Activated CD4-positive, alpha-beta memory T cell treated with anti-CD3 and anti-CD28 coated beads, Interleukin-2, amount 10 ng/mL, durations not matched to agents 7 days and 5 days (primary cell): ENCODE measurements at regions of chr20 and their contacts with region 1.

Region 1: GRCh38 chr20:44885392-44886265 is at the start of gene YWHAB:
- DNase-seq: peak; percentile 99
- H3K4me3 Mint-ChIP-seq: peak within 1 kb of the TSS; percentile 89
- H3K27ac Mint-ChIP-seq: peak within 1 kb of the TSS; percentile 90
- H3K4me1 Mint-ChIP-seq: peaks cover 48% of the 10 kb centered on the region
- H3K27me3 Mint-ChIP-seq: no peaks in the 10 kb centered on the region
- total RNA-seq, gene YWHAB: 277 to 279 TPM

Region 2: GRCh38 chr20:44770484-44771170 is 115.0 kb before region 1 on chr20:
- CTCF ChIA-PET with region 1: no interaction called
- POLR2A ChIA-PET with region 1: no interaction called
- DNase-seq: no peak
- H3K4me3 Mint-ChIP-seq: no peak overlapping the region
- H3K27ac Mint-ChIP-seq: no peak overlapping the region
- H3K4me1 Mint-ChIP-seq: no peaks in the 10 kb centered on the region
- H3K27me3 Mint-ChIP-seq: peaks cover 19% of the 10 kb centered on the region

Region 3: DNA sequence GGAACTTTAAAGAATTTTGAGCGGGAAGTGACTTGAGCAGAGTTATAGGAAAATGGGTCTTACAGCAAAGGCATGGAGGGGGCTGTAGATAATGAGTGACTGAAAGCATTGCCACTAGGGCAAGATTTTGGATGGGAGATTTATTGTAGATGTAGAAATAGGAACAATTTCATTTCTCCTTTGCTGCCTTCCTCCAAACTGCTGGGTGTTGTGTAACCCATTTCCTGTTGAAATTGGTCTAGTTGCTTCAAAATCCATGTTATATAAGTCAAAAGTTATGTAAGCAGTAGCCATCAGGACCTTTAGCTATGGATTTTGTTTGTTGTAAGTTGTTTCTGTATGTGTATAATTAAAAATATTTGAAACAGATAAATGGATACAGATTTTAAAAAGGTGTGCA is 11.0 kb after region 1 on chr20:
- CTCF ChIA-PET with region 1: interaction called, 9 read pairs
- POLR2A ChIA-PET with region 1: interaction called, 19 read pairs
- DNase-seq: no peak
- H3K4me3 Mint-ChIP-seq: no peak overlapping the region
- H3K27ac Mint-ChIP-seq: peak overlapping the region; percentile 30
- H3K4me1 Mint-ChIP-seq: peaks cover 83% of the 10 kb centered on the region
- H3K27me3 Mint-ChIP-seq: no peaks in the 10 kb centered on the region

Region 4: DNA sequence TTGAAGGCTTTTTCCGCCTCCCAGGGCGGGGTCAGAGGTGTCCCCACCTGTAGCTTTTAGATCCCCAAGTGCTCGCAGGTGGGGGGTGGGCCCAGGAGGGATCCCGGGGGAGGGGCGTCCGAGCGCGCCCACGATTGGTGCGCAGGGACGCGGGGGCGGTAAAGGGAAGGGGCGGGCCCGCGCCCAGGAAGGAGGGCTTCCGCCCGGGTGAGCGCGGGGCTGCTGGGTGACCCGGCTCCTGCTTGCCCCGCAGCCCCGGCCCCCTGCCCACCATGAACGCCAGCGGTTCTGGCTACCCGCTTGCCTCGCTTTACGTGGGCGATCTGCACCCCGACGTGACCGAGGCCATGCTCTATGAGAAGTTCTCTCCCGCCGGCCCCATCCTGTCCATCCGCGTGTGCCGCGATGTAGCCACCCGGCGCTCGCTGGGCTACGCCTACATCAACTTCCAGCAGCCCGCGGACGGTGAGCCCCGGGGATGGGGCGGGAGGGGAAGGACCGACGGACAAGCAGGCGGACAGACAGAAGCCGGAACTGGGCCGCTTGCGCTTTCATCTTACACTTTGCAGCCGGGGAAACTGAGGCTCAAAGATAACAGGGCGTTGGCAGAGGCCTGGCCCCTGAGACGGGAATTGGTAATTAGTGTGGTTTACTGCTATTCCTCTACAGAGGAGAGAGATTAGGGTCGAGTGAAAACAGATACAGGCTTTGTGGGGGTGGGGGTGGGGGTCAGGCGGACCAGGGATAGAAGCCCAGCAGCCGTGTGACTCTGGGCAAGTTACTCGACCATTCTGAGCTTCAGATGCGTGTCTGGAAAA is 24.5 kb after region 1 on chr20 and contains the start of gene PABPC1L:
- CTCF ChIA-PET with region 1: interaction called, 3 read pairs
- POLR2A ChIA-PET with region 1: interaction called, 19 read pairs
- DNase-seq: peak; percentile 76
- H3K4me3 Mint-ChIP-seq: peak within 1 kb of the TSS; percentile 85
- H3K27ac Mint-ChIP-seq: peak within 1 kb of the TSS; percentile 59
- H3K4me1 Mint-ChIP-seq: peaks cover 45% of the 10 kb centered on the region
- H3K27me3 Mint-ChIP-seq: no peaks in the 10 kb centered on the region
- total RNA-seq, gene PABPC1L: 57.9 to 58.9 TPM